ENCODE measurements at regions of chr5 and their contacts with region 1.

Region 1: DNA sequence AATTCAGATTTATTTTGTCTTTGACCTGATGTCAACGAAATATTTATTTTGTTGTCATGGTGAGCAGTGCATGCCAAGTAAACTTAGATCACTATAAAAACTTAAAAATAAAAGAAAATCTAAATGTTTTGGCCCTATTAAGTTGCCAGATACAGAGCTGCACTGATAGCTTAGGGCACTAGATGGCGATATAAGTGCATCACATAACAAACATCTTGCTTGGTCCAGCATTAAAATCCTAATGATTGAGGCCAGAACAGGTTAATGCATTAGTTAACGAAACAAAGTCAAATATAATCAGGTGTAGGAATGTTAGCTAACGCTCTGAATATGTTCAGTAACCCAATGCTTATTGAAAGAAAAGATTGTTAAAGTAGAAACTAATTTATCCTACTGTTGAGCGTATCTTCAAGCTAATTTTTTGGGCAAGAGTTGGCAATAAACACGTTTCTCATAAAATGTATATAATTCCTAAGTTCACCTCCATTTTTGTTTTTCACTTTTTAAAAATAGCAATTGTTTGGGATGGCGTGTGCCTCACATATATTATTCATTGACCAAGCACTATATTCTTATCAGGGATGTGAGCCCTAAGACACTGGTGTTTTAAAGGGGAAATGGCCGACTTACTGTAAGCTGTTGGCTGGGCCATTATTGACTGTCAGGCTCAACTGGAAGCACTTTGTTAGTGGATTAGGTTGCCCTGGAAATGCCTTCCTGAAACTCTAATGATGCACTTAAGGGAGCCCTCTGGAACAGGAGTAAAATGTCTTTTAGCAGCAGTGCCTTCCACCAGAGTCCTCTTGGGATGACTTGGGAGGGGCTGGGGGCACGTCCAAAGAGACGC is 33.3 kb downstream of the KCTD16 start:
- DNase-seq: peak; percentile 46
- H3K4me3 ChIP-seq: no peak overlapping the region
- H3K27ac ChIP-seq: no peak overlapping the region
- H3K4me1 ChIP-seq: peaks cover 3% of the 10 kb centered on the region
- H3K27me3 ChIP-seq: peaks cover 12% of the 10 kb centered on the region
- CTCF ChIP-seq: peak; percentile 90 to 96

Region 2: GRCh38 chr5:144390133-144390532 is 186.2 kb after region 1 on chr5:
- CTCF ChIA-PET with region 1: no interaction called
- dilution Hi-C with region 1: no loop called
- in situ Hi-C with region 1: no loop called
- intact Hi-C with region 1: loop called (anchors 1 kb)
- DNase-seq: peak; percentile 6
- H3K4me3 ChIP-seq: no peak overlapping the region
- H3K27ac ChIP-seq: no peak overlapping the region
- H3K4me1 ChIP-seq: no peaks in the 10 kb centered on the region
- H3K27me3 ChIP-seq: peaks cover 2% of the 10 kb centered on the region
- CTCF ChIP-seq: peak; percentile 38 to 58

Region 3: GRCh38 chr5:144451187-144451973 is 247.4 kb after region 1 on chr5:
- CTCF ChIA-PET with region 1: no interaction called
- dilution Hi-C with region 1: no loop called
- in situ Hi-C with region 1: no loop called
- intact Hi-C with region 1: no loop called
- DNase-seq: no peak
- H3K4me3 ChIP-seq: no peak overlapping the region
- H3K27ac ChIP-seq: no peak overlapping the region
- H3K4me1 ChIP-seq: no peaks in the 10 kb centered on the region
- H3K27me3 ChIP-seq: no peaks in the 10 kb centered on the region
- CTCF ChIP-seq: no peak

Region 4: DNA sequence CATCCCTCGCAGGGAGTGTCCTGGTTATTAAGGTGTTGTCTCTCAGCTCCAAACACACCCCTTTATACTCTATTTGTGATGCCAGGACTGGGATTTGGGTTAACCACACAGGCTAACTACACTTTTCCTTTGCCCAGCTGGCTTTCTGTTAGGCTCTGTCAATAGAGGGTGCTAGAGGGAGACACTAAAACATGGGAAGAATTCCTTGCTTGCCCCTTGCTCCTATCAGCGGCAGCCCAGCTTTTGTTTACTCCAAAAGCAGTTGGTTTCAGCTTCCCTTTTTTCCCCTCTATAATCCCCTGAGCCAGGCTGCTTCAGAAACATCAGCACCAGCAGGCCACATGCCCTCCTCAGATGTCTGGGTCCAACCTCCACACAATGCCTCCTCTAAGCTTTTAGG is 263.8 kb after region 1 on chr5:
- CTCF ChIA-PET with region 1: no interaction called
- dilution Hi-C with region 1: no loop called
- in situ Hi-C with region 1: no loop called
- intact Hi-C with region 1: loop called (anchors 5 kb)
- DNase-seq: peak; percentile 25
- H3K4me3 ChIP-seq: no peak overlapping the region
- H3K27ac ChIP-seq: no peak overlapping the region
- H3K4me1 ChIP-seq: no peaks in the 10 kb centered on the region
- H3K27me3 ChIP-seq: no peaks in the 10 kb centered on the region
- CTCF ChIP-seq: peak; percentile 66 to 84

Region 5: DNA sequence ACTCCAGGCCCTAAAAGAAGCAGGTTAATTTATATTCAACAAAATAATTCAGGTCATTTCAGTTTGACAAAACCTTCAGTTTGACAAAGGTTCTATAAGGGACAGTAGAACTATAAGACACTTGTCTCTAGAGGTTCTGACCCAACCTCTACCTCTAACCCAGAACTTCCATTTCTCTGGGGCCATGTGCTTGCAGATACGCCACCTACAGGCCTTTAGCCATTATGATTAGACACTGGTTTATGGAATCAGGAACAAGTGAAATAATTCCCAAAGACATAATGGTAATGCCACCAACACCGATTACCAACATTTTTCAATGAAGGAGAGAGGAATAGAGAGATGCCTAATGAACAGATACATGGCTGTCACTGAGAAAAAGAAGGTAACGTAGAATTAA is 897.3 kb after region 1 on chr5:
- CTCF ChIA-PET with region 1: no interaction called
- dilution Hi-C with region 1: no loop called
- in situ Hi-C with region 1: no loop called
- intact Hi-C with region 1: loop called (anchors 2 kb)
- DNase-seq: no peak
- H3K4me3 ChIP-seq: no peak overlapping the region
- H3K27ac ChIP-seq: no peak overlapping the region
- H3K4me1 ChIP-seq: no peaks in the 10 kb centered on the region
- H3K27me3 ChIP-seq: peaks cover 2% of the 10 kb centered on the region
- CTCF ChIP-seq: peak; percentile 57 to 60

Region 6: DNA sequence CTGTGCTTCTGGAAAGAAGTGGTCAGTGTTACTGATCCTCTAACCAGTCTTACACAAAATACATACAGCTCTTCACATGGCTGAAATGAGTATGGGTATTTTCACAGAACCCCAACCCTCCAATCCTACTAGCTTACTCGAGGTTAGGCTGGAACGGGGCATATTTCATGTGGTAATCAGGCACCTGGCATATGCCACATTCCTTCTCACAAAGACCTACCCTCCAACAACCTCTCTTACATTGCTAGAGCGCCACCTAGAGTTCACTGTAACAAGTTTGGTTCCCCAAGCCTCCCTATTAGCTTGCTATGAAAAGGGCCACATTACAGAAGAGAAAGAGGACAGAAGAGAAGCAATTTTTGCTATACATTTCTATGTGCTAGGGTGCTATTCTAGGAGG is 1033.9 kb after region 1 on chr5:
- CTCF ChIA-PET with region 1: no interaction called
- dilution Hi-C with region 1: no loop called
- in situ Hi-C with region 1: loop called in 1 of 2 experiments (anchors 10 kb)
- intact Hi-C with region 1: loop called (anchors 1 kb)
- DNase-seq: peak; percentile 45
- H3K4me3 ChIP-seq: no peak overlapping the region
- H3K27ac ChIP-seq: no peak overlapping the region
- H3K4me1 ChIP-seq: no peaks in the 10 kb centered on the region
- H3K27me3 ChIP-seq: no peaks in the 10 kb centered on the region
- CTCF ChIP-seq: peak; percentile 74

Region 7: GRCh38 chr5:145347026-145347616 is 1143.1 kb after region 1 on chr5:
- CTCF ChIA-PET with region 1: interaction called, 3 read pairs
- dilution Hi-C with region 1: no loop called
- in situ Hi-C with region 1: no loop called
- intact Hi-C with region 1: loop called (anchors 2 kb)
- DNase-seq: peak; percentile 40
- H3K4me3 ChIP-seq: no peak overlapping the region
- H3K27ac ChIP-seq: no peak overlapping the region
- H3K4me1 ChIP-seq: peaks cover 10% of the 10 kb centered on the region
- H3K27me3 ChIP-seq: no peaks in the 10 kb centered on the region
- CTCF ChIP-seq: peak; percentile 64 to 70

Region 8: DNA sequence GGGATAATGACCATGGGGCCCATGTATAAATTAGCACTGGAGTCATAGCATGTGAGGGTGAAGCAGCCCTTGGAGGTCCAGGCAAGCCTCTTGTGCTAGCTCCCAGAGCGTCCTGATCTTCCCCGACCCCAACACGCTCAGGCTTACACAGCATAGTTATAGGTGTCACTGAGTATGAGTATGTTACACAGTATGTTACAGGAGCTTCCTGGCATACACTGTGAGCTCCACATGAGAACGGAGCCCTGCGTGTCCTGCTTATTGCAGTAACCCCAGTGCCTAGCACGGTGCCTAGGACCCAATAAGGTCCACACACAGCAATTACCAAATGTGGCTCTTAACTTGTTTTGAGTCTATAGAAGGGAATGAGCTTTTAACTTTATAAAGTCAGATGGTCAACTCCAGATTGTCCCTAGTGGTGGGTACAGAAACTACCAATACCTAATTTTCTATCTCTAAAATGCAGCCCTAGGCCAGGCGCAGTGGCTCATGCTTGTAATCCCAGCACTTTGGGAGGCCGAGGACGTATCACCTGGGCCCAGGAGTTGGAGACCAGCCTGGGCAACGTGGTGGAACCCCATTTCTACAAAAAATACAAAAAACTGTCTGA is 1837.3 kb after region 1 on chr5:
- CTCF ChIA-PET with region 1: no interaction called
- dilution Hi-C with region 1: no loop called
- in situ Hi-C with region 1: no loop called
- intact Hi-C with region 1: loop called (anchors 5 kb)
- DNase-seq: no peak
- H3K4me3 ChIP-seq: no peak overlapping the region
- H3K27ac ChIP-seq: no peak overlapping the region
- H3K4me1 ChIP-seq: peaks cover 35% of the 10 kb centered on the region
- H3K27me3 ChIP-seq: no peaks in the 10 kb centered on the region
- CTCF ChIP-seq: peak; percentile 41 to 49

Measured in mammary epithelial cell (primary cell).